ENCODE measurements at regions of chr17 and their contacts with region 1.

Region 1: GRCh38 chr17:15502369-15503112 is 35.1 kb upstream of the CDRT4 start:
- DNase-seq: peak; percentile 71
- ATAC-seq: peak; percentile 91
- H3K4me3 ChIP-seq: peak overlapping the region in 2 of 5 experiments; percentile 18 to 22
- H3K4me3 Mint-ChIP-seq: peak overlapping the region; percentile 69
- H3K27ac ChIP-seq: no peak overlapping the region
- H3K27ac Mint-ChIP-seq: no peak overlapping the region
- H3K4me1 ChIP-seq: peaks cover 13% of the 10 kb centered on the region in 2 donors
- H3K4me1 Mint-ChIP-seq: peaks cover 14% of the 10 kb centered on the region
- H3K27me3 ChIP-seq: no peaks in the 10 kb centered on the region
- H3K27me3 Mint-ChIP-seq: no peaks in the 10 kb centered on the region
- CTCF ChIP-seq: peak; percentile 83

Region 2: GRCh38 chr17:15257258-15257788 is 245.2 kb before region 1 on chr17:
- CTCF ChIA-PET with region 1: interaction called, 20 read pairs
- POLR2A ChIA-PET with region 1: no interaction called
- intact Hi-C with region 1: loop called (anchors 1 kb)
- DNase-seq: peak; percentile 61
- ATAC-seq: peak; percentile 45
- H3K4me3 ChIP-seq: no peak overlapping the region
- H3K4me3 Mint-ChIP-seq: no peak overlapping the region
- H3K27ac ChIP-seq: no peak overlapping the region
- H3K27ac Mint-ChIP-seq: peak overlapping the region; percentile 34
- H3K4me1 ChIP-seq: peaks cover 12 to 16% of the 10 kb centered on the region in 2 donors
- H3K4me1 Mint-ChIP-seq: peaks cover 18% of the 10 kb centered on the region
- H3K27me3 ChIP-seq: peaks cover 0 to 39% (median 24%) of the 10 kb centered on the region in 4 experiments
- H3K27me3 Mint-ChIP-seq: peaks cover 61% of the 10 kb centered on the region
- CTCF ChIP-seq: peak; percentile 79

Region 3: DNA sequence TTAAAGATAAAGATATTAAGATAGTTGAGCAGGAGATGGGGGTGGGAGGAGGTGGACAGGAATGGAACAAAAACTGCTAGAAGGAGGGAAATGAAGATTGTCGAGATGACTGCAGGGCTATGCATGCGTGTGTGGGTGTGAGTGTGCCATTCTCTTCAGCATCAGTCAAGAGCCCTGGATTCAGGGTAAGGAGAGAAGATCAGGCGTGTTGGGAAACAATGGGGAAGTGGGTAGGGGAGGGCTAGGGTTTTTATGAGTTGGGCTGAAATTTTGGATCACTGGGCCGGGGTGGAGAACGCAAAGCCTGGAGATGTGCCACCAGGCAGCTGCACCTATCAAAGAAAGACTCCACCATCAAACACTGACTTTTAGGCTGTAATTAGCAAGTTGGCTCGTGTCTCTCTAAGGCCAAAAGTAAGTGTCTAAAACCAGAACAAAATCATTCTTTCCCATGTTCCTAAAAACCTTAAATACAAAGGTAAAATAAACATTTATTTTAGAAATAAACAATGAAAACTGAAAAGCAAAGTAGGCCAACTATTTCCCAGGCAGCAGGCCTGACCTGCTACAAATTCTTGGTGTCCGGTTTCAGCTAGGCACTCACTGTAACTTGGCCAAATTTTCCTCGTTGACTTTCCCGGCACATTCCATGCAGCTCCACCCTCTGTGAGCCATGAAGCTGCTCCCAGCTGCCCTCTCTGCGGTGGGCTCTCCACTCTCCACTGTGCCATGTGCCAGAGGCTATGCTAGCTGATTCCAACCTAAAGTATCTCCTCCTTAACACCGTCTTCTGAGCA is 39.4 kb before region 1 on chr17:
- CTCF ChIA-PET with region 1: no interaction called
- POLR2A ChIA-PET with region 1: no interaction called
- intact Hi-C with region 1: no loop called
- DNase-seq: no peak
- ATAC-seq: no peak
- H3K4me3 ChIP-seq: no peak overlapping the region
- H3K4me3 Mint-ChIP-seq: no peak overlapping the region
- H3K27ac ChIP-seq: no peak overlapping the region
- H3K27ac Mint-ChIP-seq: no peak overlapping the region
- H3K4me1 ChIP-seq: no peaks in the 10 kb centered on the region
- H3K4me1 Mint-ChIP-seq: no peaks in the 10 kb centered on the region
- H3K27me3 ChIP-seq: no peaks in the 10 kb centered on the region
- H3K27me3 Mint-ChIP-seq: no peaks in the 10 kb centered on the region
- CTCF ChIP-seq: no peak